ENCODE measurements at regions of chr17 and their contacts with region 1.

Region 1: DNA sequence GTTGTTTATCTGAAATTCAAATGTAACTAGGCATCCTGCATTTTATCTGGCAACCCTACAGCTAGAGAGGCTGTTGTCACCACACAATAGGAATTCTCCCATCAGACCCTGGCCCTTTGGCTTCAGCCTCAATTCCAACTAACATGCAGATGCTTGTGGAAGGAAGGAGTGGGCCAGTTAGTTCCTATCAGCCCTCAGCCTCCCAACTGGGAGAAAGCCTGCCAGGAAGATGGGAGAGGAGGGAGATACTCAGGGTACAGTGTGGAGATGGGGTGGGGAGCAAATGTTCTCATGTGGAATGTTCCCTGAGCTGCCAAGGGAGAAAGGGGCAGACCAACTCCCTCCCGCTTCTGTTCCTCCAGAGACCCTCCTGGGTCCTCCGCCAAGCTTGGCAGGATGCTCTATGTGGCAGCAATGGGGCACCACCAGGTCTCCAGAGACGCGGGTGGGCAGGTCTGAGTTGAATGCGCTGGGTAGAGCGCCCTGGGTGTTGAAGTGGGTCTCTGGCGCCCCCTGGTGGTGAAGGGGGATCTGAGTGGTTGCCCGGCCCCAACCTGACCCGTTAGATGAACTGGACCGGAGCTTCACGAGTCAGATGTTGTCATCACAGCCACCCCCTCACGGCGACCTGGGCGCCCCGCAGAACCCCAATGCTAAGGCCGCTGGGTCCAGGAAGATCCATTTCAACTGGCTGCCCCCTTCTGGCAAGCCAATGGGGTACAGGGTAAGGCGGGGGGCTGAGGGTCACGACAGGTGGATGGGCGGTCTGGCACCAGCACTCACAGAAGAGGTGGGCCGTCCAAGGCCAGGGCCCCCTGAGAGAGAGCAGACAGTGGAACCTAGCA is 15.2 kb downstream of the GALK1 start:
- DNase-seq: peak; percentile 91
- H3K4me3 Mint-ChIP-seq: peak overlapping the region; percentile 37
- H3K27ac Mint-ChIP-seq: no peak overlapping the region
- H3K4me1 Mint-ChIP-seq: peaks cover 21% of the 10 kb centered on the region
- H3K27me3 Mint-ChIP-seq: no peaks in the 10 kb centered on the region

Region 2: DNA sequence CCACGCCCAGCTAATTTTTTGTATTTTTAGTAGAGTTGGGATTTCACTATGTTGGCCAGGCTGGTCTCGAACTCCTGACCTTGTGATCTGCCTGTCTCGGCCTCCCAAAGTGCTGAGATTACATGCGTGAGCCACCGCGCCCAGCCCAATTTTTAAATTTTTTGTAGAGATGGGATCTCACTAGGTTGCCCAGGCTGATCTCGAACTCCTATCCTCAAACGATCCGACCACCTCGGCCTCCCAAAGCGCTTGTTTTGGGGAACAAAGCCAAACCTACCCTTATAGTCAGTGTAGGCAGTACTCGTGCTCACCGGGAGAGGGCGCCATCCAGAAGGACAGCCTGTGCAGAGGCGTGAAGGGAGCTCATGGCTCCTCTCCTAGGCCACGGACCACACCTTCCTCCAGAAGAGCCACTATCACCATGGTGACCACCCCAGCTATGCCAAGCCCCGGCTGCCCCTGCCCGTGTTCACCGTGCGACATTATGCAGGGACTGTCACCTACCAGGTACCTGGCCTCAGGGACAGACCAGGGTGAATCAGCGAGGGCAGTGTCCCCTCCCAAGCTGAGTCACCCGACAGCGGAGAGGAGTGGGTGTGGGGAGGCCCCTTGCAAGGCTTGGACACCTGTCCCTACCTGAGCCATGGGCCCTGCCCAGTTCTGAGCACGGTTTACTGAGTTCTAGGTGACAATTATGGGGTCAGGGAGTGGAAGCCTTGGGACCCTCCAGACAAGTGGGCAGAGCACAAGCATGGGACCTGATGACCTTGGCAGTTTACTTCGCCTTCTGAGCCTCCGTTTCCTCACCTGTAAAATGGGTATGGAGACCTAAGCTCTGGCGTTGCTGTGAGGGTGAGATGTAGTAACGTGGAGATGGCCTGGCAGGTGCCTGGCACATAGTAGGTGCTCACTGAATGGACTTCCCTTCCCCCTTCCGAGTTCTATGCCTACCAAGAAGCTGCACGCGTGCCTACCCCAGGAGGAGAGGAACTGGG is 148.4 kb before region 1 on chr17:
- CTCF ChIA-PET with region 1: interaction called, 21 read pairs
- POLR2A ChIA-PET with region 1: no interaction called
- intact Hi-C with region 1: no loop called
- DNase-seq: peak; percentile 75
- H3K4me3 Mint-ChIP-seq: no peak overlapping the region
- H3K27ac Mint-ChIP-seq: no peak overlapping the region
- H3K4me1 Mint-ChIP-seq: no peaks in the 10 kb centered on the region
- H3K27me3 Mint-ChIP-seq: no peaks in the 10 kb centered on the region

Region 3: DNA sequence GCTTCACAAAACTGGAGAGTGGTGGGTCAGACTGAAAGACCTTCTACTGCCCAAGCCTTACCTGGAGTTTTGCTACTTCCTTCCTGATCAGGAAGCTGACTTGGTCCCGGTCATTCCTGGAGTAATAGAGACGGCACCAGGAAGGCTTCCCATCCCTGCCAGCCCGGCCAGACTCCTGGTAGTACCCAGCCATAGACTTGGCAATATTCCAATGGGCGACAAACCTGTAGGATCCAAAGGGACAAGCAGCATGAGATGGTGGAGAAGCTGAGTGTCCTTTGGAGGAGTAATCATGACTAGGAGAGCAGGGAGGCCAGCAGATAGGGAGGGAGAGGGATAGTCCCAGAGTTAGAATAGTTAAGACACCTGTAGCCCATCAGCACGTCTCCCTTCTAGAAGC is 91.5 kb before region 1 on chr17:
- CTCF ChIA-PET with region 1: interaction called, 40 read pairs
- POLR2A ChIA-PET with region 1: no interaction called
- intact Hi-C with region 1: no loop called
- DNase-seq: no peak
- H3K4me3 Mint-ChIP-seq: no peak overlapping the region
- H3K27ac Mint-ChIP-seq: no peak overlapping the region
- H3K4me1 Mint-ChIP-seq: no peaks in the 10 kb centered on the region
- H3K27me3 Mint-ChIP-seq: no peaks in the 10 kb centered on the region

Region 4: GRCh38 chr17:75689441-75689873 is 60.3 kb before region 1 on chr17:
- CTCF ChIA-PET with region 1: interaction called, 31 read pairs
- POLR2A ChIA-PET with region 1: no interaction called
- intact Hi-C with region 1: no loop called
- DNase-seq: peak; percentile 60
- H3K4me3 Mint-ChIP-seq: no peak overlapping the region
- H3K27ac Mint-ChIP-seq: peak overlapping the region; percentile 78
- H3K4me1 Mint-ChIP-seq: peaks cover 64% of the 10 kb centered on the region
- H3K27me3 Mint-ChIP-seq: no peaks in the 10 kb centered on the region

Region 5: GRCh38 chr17:75779231-75779986 is 29.6 kb after region 1 on chr17:
- CTCF ChIA-PET with region 1: interaction called, 19 read pairs
- POLR2A ChIA-PET with region 1: interaction called, 14 read pairs
- intact Hi-C with region 1: no loop called
- DNase-seq: peak; percentile 97
- H3K4me3 Mint-ChIP-seq: peak overlapping the region; percentile 87
- H3K27ac Mint-ChIP-seq: peak overlapping the region; percentile 97
- H3K4me1 Mint-ChIP-seq: peaks cover 43% of the 10 kb centered on the region
- H3K27me3 Mint-ChIP-seq: peaks cover 4% of the 10 kb centered on the region

Region 6: DNA sequence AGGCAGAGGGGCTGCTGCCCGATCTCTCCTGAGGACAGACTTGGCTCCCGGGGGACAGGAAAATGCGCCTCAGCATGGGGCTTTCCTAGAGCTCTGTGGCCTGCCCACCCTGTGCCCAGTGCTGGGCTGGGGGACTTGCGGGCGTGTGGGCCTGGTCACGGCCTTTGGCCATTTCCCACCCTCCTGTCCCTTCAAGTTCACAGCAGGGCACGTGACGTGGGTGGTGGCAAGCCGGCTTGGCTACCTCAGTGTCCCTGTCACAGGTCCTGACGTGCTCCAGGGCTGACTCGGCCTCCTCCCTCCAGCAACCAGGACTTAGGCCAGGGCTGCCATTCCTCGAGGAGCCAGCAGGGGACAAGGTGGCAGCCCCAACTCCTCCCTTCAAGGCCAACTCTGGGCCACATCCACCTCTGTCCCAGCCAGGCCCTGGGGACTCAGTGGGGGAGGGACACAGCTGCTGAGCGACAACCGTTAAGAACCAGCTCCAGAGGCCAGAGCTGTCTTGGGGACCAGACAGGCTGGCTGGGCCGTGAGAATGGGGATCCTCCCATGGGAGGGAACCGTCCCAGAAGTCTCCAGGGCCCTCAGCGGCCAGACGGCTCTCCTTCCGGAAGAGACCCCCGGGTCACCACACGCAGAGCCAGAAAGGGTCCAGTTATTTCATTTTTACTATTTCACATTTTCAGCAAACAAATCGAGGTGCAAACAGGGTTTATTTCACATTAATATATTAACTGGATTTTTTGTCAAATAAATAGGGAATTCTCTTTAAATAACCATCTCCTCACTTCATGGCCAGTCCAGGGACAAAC is 95.5 kb after region 1 on chr17:
- CTCF ChIA-PET with region 1: interaction called, 25 read pairs
- POLR2A ChIA-PET with region 1: no interaction called
- intact Hi-C with region 1: no loop called
- DNase-seq: peak; percentile 83
- H3K4me3 Mint-ChIP-seq: peak overlapping the region; percentile 57
- H3K27ac Mint-ChIP-seq: peak overlapping the region; percentile 95
- H3K4me1 Mint-ChIP-seq: peaks cover 21% of the 10 kb centered on the region
- H3K27me3 Mint-ChIP-seq: no peaks in the 10 kb centered on the region

Measured in activated CD4-positive, alpha-beta memory T cell treated with anti-CD3 and anti-CD28 coated beads for 36 hours (primary cell).